PC-3 (cell line): ENCODE measurements at regions of chr19 and their contacts with region 1.

Region 1: GRCh38 chr19:47863514-47863936 is 4.5 kb downstream of the TPRX2 start:
- DNase-seq: peak; percentile 79
- ATAC-seq: peak; percentile 98
- H3K4me3 ChIP-seq: no peak overlapping the region
- H3K27ac ChIP-seq: no peak overlapping the region
- H3K4me1 ChIP-seq: no peaks in the 10 kb centered on the region
- H3K27me3 ChIP-seq: no peaks in the 10 kb centered on the region
- CTCF ChIP-seq: peak; percentile 89

Region 2: DNA sequence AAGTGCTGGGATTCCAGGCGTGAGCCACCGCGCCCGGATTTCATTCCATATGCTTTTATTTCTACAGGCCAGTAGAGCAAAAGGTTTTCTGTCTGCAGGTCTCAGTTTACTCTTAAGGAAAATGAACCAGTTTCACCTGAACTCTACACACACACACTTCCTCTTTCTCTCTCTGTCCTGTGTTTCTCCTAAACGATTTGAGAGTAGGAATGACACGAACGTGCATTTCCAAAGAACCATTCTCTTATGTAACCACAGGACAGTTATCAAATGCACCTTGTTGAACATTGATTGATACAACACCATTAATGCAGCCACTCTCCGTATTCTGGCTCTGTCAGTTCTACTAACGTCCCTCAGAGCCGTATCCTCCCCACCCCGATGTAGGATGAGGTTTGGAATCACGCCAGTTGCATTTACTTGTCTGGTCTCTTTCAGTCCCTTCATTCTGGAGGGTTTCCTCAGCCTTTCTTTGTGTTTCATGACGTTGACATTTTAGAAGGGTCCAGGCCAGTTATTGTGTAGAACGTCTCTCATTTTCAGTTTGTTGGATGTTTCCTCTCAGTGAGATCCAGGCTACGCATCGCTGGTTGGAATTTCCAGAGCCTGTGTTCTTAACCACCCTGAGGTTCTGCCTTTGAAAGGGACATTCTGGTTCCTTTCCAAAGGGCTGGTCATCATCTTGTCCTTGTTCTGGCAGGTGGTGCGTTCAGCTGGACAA is 218.6 kb before region 1 on chr19:
- CTCF ChIA-PET with region 1: no interaction called
- POLR2A ChIA-PET with region 1: no interaction called
- intact Hi-C with region 1: no loop called
- DNase-seq: no peak
- ATAC-seq: no peak
- H3K4me3 ChIP-seq: no peak overlapping the region
- H3K27ac ChIP-seq: no peak overlapping the region
- H3K4me1 ChIP-seq: peaks cover 19% of the 10 kb centered on the region
- H3K27me3 ChIP-seq: no peaks in the 10 kb centered on the region
- CTCF ChIP-seq: no peak

Region 3: DNA sequence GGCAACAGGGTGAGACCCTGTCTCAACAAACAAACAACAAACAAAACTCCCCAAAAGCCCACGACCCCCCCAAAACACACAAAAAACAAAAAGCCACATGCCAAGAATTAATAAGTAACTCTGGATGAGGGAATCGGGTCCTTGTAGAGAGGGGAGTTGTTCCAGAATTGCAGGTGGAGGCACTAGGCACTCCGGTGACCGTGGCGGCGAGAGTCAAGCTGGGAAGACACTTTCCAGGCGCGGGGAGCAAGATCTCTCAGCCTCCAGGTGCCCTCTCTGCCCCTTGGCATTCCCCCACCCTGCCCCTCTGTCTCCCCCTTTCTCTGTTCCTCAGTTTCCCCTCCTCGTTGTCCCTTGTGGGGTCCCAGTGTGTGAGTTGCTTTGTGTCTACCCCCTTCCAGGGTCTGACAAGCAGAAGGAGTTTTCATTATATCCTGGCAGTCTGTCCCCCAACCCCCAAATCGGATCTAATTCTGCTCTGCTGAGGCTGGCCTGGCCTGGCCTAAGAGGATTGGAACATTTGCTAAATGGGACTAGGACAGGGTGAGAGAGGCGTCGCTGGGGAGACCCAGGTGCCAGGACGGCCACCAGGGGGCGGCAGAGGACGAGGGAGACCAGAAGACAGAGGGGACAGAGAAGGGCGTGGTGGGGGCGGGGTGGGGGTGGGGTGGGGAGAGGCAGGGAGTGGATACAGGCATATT is 50.1 kb before region 1 on chr19:
- CTCF ChIA-PET with region 1: no interaction called
- POLR2A ChIA-PET with region 1: no interaction called
- intact Hi-C with region 1: loop called (anchors 5 kb)
- DNase-seq: peak; percentile 69
- ATAC-seq: peak; percentile 70
- H3K4me3 ChIP-seq: no peak overlapping the region
- H3K27ac ChIP-seq: no peak overlapping the region
- H3K4me1 ChIP-seq: no peaks in the 10 kb centered on the region
- H3K27me3 ChIP-seq: no peaks in the 10 kb centered on the region
- CTCF ChIP-seq: peak; percentile 53

Region 4: DNA sequence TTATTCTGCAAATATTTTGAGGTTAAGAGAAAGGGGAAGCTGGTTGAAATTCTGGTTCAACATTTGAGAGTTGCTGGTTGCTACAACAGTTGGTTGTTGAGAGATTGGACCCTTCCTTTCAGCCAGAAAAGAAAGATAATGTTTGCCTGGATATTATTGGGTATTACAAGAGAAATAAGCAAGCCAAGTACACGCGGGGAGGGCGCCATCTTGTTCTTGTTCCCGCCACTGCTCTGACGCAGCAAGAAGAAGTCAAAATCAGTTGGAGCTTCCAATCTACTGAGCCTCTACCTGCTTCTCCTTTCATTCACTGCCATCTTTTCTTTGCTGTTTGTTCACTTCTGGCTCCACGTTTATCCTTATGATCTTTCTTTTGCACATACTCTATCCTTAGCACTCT is 110.0 kb after region 1 on chr19:
- CTCF ChIA-PET with region 1: no interaction called
- POLR2A ChIA-PET with region 1: no interaction called
- intact Hi-C with region 1: no loop called
- DNase-seq: no peak
- ATAC-seq: no peak
- H3K4me3 ChIP-seq: no peak overlapping the region
- H3K27ac ChIP-seq: no peak overlapping the region
- H3K4me1 ChIP-seq: no peaks in the 10 kb centered on the region
- H3K27me3 ChIP-seq: peaks cover 37% of the 10 kb centered on the region
- CTCF ChIP-seq: no peak

Region 5: GRCh38 chr19:48190288-48190884 is 326.9 kb after region 1 on chr19:
- CTCF ChIA-PET with region 1: interaction called, 13 read pairs
- POLR2A ChIA-PET with region 1: no interaction called
- intact Hi-C with region 1: no loop called
- DNase-seq: peak; percentile 97
- ATAC-seq: peak; percentile 97
- H3K4me3 ChIP-seq: no peak overlapping the region
- H3K27ac ChIP-seq: peak overlapping the region; percentile 34; the same call in 1 of the 2 replicates
- H3K4me1 ChIP-seq: peaks cover 11% of the 10 kb centered on the region
- H3K27me3 ChIP-seq: no peaks in the 10 kb centered on the region
- CTCF ChIP-seq: peak; percentile 62